Activated T-helper 1 cell treated with anti-CD3 and anti-CD28 coated beads, Interleukin-12 subunit alpha, Interleukin-12 subunit beta, Interleukin-2, Interleukin-4 antibody, amounts not matched to agents 30 ng/mL and 10 ng/mL and 1 ng/mL, durations not matched to agents 14 hours and 24 hours and 36 hours (primary cell): ENCODE measurements at regions of chr1 and their contacts with region 1.

Region 1: GRCh38 chr1:168225476-168226190 is at the start of gene SFT2D2:
- DNase-seq: peak; percentile 77
- H3K4me3 Mint-ChIP-seq: peak within 1 kb of the TSS; percentile 90
- H3K27ac Mint-ChIP-seq: peak within 1 kb of the TSS; percentile 87
- H3K4me1 Mint-ChIP-seq: peaks cover 61% of the 10 kb centered on the region
- H3K27me3 Mint-ChIP-seq: peaks cover 4% of the 10 kb centered on the region
- total RNA-seq, gene SFT2D2: 71.1 and 76.5 TPM in 2 replicates

Region 2: DNA sequence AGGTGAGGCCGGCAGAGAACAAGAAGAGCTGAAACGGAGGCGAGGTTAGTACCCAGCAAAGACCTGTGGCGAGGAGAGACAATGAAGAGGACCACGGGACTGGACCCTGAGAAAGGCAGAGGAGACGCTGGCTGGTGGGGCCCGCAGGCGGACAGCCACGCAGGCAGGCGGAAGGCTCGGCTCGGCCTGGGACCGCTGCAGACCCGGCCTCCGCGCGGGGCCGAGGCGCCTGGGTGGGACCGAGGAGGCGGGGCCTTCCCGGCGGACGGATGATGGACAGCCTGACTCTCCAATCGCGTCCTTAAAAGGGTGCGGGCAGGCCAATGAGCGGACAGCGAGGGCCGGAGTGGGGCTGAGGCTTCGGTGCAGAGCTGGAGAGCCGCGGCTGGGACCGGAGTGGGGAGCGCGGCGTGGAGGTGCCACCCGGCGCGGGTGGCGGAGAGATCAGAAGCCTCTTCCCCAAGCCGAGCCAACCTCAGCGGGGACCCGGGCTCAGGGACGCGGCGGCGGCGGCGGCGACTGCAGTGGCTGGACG is 503.9 kb before region 1 on chr1 and contains the start of gene MPZL1:
- intact Hi-C with region 1: loop called (anchors 5 kb)
- DNase-seq: peak; percentile 92
- H3K4me3 Mint-ChIP-seq: peak within 1 kb of the TSS; percentile 95
- H3K27ac Mint-ChIP-seq: peak within 1 kb of the TSS; percentile 83
- H3K4me1 Mint-ChIP-seq: peaks cover 77% of the 10 kb centered on the region
- H3K27me3 Mint-ChIP-seq: no peaks in the 10 kb centered on the region
- total RNA-seq, gene MPZL1: 40.8 and 40.9 TPM in 2 replicates

Region 3: DNA sequence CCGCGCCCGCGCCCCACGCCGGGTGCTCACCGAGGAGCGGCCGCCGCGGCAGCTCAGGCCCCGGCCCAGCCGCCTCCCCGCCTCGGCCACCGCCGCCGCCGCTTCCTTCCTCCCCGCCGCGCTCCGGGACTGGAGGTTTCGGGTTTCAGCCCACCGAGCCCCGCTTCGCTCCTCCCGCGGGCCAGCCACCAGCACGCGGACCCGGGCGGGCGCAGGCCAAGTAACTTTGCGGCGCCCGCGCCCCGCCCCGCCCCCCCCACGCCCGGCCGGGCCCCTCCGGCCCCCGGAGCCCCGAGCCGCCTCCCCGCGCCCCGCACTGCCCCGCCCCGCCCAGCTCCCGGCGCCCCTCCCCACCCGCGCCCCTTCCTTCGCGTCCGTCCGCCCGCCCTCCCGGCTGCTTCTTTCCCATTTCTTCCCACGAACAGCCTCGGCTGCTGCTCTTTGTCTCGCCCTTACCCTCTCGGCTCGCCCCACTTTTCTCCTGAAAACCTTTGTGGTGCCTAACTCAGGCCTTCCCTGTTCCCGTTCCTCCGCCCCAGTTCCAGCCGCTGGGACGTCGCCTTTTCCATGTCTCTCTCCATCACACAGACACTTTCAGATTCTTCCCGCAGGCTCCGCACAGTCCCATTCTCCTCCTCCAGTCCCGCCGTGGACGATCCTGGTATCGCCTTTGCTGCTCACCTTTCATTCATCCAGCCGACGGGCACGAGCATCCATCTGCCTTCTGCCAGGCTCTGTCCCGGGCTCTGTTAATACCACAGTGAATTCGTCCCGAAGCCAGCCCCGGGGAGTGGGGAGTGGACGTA is 88.7 kb before region 1 on chr1 and contains the start of gene GPR161:
- intact Hi-C with region 1: loop called (anchors 5 kb)
- DNase-seq: no peak
- H3K4me3 Mint-ChIP-seq: peak within 1 kb of the TSS; percentile 85
- H3K27ac Mint-ChIP-seq: peak within 1 kb of the TSS; percentile 71
- H3K4me1 Mint-ChIP-seq: peaks cover 26% of the 10 kb centered on the region
- H3K27me3 Mint-ChIP-seq: peaks cover 53% of the 10 kb centered on the region
- total RNA-seq, gene GPR161: 0.41 and 0.42 TPM in 2 replicates

Region 4: GRCh38 chr1:168178638-168179437 is 46.8 kb before region 1 on chr1 and contains the start of gene TIPRL:
- intact Hi-C with region 1: loop called (anchors 1 kb)
- DNase-seq: peak; percentile 95
- H3K4me3 Mint-ChIP-seq: no peak within 1 kb of the TSS
- H3K27ac Mint-ChIP-seq: no peak within 1 kb of the TSS
- H3K4me1 Mint-ChIP-seq: no peaks in the 10 kb centered on the region
- H3K27me3 Mint-ChIP-seq: no peaks in the 10 kb centered on the region
- total RNA-seq, gene TIPRL: 42.8 and 45.7 TPM in 2 replicates

Region 5: GRCh38 chr1:168195199-168196135 is 30.2 kb before region 1 on chr1:
- intact Hi-C with region 1: loop called (anchors 2 kb)
- DNase-seq: no peak
- H3K4me3 Mint-ChIP-seq: no peak overlapping the region
- H3K27ac Mint-ChIP-seq: peak overlapping the region; percentile 10
- H3K4me1 Mint-ChIP-seq: peaks cover 13% of the 10 kb centered on the region
- H3K27me3 Mint-ChIP-seq: no peaks in the 10 kb centered on the region

Region 6: DNA sequence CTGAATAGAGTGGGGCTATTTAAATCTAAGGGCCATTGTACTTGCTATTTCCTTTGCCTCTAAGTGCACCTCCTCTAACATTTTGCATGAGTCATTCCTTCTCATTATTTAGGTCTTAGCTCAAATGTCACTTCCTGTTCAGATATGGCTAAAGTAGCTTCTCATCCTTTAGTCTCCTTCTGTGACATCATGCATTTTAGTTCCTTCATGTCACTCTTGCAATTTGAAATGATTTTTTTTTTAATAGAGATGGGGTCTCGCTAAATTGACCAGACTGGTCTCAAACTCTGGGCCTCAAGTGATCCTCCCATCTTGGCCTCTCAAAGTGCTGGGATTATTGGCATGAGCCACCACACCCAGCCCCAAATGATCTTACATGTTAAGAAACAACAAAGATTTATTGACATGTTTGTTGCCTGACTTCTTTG is 61.6 kb after region 1 on chr1:
- intact Hi-C with region 1: loop called (anchors 2 kb)
- DNase-seq: no peak
- H3K4me3 Mint-ChIP-seq: no peak overlapping the region
- H3K27ac Mint-ChIP-seq: no peak overlapping the region
- H3K4me1 Mint-ChIP-seq: peaks cover 17% of the 10 kb centered on the region
- H3K27me3 Mint-ChIP-seq: no peaks in the 10 kb centered on the region

Region 7: DNA sequence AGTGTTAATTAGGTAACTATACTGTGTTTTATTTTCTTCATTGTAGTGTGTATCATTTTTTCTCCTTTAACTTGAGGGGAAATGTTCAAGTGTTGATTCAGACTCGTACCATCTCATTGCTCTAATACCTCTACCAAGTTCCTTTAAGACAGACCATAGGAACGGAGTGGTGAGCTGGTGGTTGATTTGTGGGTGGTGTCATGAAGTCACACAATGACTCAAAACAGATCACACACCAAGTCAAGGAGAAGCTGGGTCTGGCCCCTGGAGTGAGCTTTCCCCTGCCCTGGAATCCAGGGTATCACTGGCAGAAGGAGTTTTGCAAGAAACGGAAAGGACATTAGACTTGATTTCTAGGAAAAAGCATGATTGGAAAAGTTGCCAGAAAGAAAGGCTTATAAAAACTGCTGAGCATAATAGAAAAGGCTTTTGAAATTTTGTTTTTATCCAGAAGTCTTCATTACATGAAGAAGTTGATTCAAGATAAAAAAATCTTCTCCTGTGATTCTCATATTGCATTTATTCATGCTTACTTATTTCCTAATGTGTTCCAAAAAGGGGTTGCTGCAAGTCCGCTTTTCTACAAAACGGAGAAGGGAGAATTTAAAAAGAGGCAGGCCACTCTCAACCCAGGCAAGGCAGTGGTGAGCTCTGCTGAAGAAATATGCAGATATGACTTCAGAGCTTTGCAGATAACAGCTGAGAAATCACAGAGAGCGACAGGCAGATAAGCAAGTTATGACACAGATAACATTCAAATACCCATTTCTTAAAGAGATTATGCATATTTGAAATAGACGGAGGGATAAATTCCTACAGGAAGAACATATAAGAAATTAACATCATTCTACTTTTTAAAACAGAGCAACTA is 134.8 kb after region 1 on chr1:
- intact Hi-C with region 1: loop called (anchors 1 kb)
- DNase-seq: peak; percentile 36
- H3K4me3 Mint-ChIP-seq: peak overlapping the region; percentile 12
- H3K27ac Mint-ChIP-seq: peak overlapping the region; percentile 68
- H3K4me1 Mint-ChIP-seq: peaks cover 43% of the 10 kb centered on the region
- H3K27me3 Mint-ChIP-seq: peaks cover 3% of the 10 kb centered on the region